PC-9 (cell line): ENCODE measurements at regions of chr6 and their contacts with region 1.

Region 1: GRCh38 chr6:30914076-30914853 is at the start of gene VARS2:
- DNase-seq: peak; percentile 78 to 99
- H3K4me3 ChIP-seq: peak within 1 kb of the TSS; percentile 84
- H3K27ac ChIP-seq: peak within 1 kb of the TSS; percentile 46
- H3K4me1 ChIP-seq: peaks cover 17% of the 10 kb centered on the region
- H3K27me3 ChIP-seq: no peaks in the 10 kb centered on the region
- CTCF ChIP-seq: peak; percentile 46
- total RNA-seq, gene VARS2: 59.4 and 60.3 TPM in 2 replicates

Region 2: GRCh38 chr6:29870104-29870503 is 1044.2 kb before region 1 on chr6:
- CTCF ChIA-PET with region 1: no interaction called
- POLR2A ChIA-PET with region 1: no interaction called
- intact Hi-C with region 1: no loop called
- DNase-seq: no peak
- H3K4me3 ChIP-seq: no peak overlapping the region
- H3K27ac ChIP-seq: no peak overlapping the region
- H3K4me1 ChIP-seq: no peaks in the 10 kb centered on the region
- H3K27me3 ChIP-seq: peaks cover 15% of the 10 kb centered on the region
- CTCF ChIP-seq: no peak

Region 3: DNA sequence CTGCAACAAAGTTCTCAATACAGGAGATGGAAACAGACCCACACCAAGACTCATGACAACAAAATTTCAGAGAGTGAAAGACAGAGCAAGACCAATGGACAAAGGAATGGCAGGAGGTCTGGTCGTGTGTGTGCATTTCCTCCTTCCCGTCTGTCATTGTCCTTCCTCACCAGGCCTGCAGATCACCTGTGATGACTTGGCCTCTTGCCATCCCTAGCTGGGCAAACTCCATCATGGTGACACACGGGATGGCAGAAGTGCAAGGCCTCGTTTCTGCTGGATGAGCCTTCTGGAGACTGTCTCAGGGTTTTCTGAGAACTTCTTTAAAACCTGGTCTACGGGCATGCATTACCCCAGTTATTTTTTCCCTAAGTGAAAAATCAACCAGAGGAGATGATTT is 520.1 kb before region 1 on chr6:
- CTCF ChIA-PET with region 1: no interaction called
- POLR2A ChIA-PET with region 1: no interaction called
- intact Hi-C with region 1: no loop called
- DNase-seq: no peak
- H3K4me3 ChIP-seq: no peak overlapping the region
- H3K27ac ChIP-seq: no peak overlapping the region
- H3K4me1 ChIP-seq: no peaks in the 10 kb centered on the region
- H3K27me3 ChIP-seq: peaks cover 73% of the 10 kb centered on the region
- CTCF ChIP-seq: no peak

Region 4: GRCh38 chr6:30686908-30687658 is 227.2 kb before region 1 on chr6:
- CTCF ChIA-PET with region 1: no interaction called
- POLR2A ChIA-PET with region 1: no interaction called
- intact Hi-C with region 1: loop called (anchors 1 kb)
- DNase-seq: peak; percentile 80 to 98
- H3K4me3 ChIP-seq: peak overlapping the region; percentile 98
- H3K27ac ChIP-seq: peak overlapping the region; percentile 72
- H3K4me1 ChIP-seq: peaks cover 59% of the 10 kb centered on the region
- H3K27me3 ChIP-seq: no peaks in the 10 kb centered on the region
- CTCF ChIP-seq: no peak

Region 5: GRCh38 chr6:30883685-30884520 is 30.4 kb before region 1 on chr6 and contains the start of gene DDR1:
- CTCF ChIA-PET with region 1: interaction called, 8 read pairs
- POLR2A ChIA-PET with region 1: interaction called, 21 read pairs
- intact Hi-C with region 1: loop called (anchors 2 kb)
- DNase-seq: peak; percentile 81 to 85
- H3K4me3 ChIP-seq: peak within 1 kb of the TSS; percentile 98
- H3K27ac ChIP-seq: peak within 1 kb of the TSS; percentile 94
- H3K4me1 ChIP-seq: peaks cover 44% of the 10 kb centered on the region
- H3K27me3 ChIP-seq: no peaks in the 10 kb centered on the region
- CTCF ChIP-seq: no peak
- total RNA-seq, gene DDR1: 267 and 269 TPM in 2 replicates

Region 6: GRCh38 chr6:31079656-31080261 is 165.5 kb after region 1 on chr6:
- CTCF ChIA-PET with region 1: interaction called, 13 read pairs
- POLR2A ChIA-PET with region 1: no interaction called
- intact Hi-C with region 1: loop called (anchors 2 kb)
- DNase-seq: peak; percentile 46 to 64
- H3K4me3 ChIP-seq: no peak overlapping the region
- H3K27ac ChIP-seq: no peak overlapping the region
- H3K4me1 ChIP-seq: no peaks in the 10 kb centered on the region
- H3K27me3 ChIP-seq: no peaks in the 10 kb centered on the region
- CTCF ChIP-seq: peak; percentile 90

Region 7: DNA sequence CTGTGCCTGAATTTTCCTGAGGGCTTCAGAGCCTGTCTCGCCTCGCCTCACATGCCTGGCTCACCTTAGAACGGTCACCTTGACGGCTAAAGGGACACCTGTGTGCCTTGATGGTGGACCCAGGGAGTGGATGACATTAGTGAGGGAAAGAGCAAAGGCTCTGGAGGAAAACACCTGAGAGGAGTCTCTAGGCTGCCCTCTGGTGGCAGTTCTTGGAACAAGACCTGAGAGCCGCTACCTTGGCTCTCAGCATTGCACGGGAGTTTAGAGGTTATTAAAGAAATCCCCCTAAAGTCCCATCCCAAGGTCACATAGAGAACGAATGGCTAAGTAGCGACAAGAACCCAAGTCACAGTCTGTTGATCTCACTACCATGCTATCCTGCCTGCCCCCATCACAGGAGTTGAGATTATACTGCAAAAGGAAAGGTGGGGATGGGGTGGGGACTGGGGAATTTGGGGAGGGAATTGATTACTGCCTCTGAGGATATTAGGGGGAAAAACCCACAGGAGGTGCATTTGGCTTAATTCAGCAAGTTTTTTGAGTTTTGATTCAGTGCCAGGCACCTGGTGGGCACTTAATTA is 213.9 kb after region 1 on chr6:
- CTCF ChIA-PET with region 1: no interaction called
- POLR2A ChIA-PET with region 1: no interaction called
- intact Hi-C with region 1: loop called (anchors 2 kb)
- DNase-seq: peak; percentile 45 to 66
- H3K4me3 ChIP-seq: no peak overlapping the region
- H3K27ac ChIP-seq: no peak overlapping the region
- H3K4me1 ChIP-seq: peaks cover 15% of the 10 kb centered on the region
- H3K27me3 ChIP-seq: no peaks in the 10 kb centered on the region
- CTCF ChIP-seq: peak; percentile 85